Posterior vena cava (tissue), 2 donors: ENCODE measurements at regions of chr6 and their contacts with region 1.

Region 1: GRCh38 chr6:53725791-53726431 is 60.4 kb upstream of the KLHL31 start:
- DNase-seq: peak; percentile 93

Region 2: GRCh38 chr6:52503848-52504781 is 1221.8 kb before region 1 on chr6:
- intact Hi-C with region 1: no loop called
- DNase-seq: peak; percentile 94

Region 3: DNA sequence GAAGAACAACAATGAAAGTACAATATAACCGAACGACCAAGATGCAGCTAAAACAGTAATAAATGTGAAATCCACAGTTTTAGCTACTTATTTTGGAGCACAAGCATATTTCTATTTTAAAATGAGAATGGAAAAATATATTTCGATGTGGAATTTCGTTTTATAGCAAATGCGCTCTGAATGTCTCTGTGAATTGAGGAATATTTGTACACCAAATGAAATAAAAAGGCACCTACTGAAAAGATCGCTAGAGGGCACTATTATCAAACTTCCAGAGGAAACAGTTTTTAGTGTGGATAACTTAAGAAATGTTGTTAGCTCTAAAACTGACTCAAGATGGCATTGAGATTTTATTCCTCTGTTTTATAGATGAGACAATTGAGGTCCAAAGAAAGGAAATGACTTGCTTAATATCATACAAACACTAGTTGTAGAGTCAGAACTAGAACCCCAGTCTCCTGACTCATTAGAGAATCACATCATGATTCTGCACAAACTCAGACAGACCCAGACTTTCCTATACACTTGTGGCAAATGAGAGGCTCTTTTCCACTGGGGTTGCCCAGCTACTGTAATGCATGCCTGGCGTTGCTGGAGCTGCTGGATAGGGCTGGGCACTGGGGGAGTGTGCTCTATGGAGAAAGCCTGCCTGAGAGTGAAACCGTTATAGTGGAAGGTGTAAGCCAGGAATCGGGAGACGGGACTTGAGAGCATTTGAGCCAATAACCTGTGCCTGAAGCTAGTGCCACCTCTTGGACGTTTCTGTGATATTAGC is 232.9 kb before region 1 on chr6:
- intact Hi-C with region 1: loop called in 1 of 2 experiments (anchors 5 kb)
- DNase-seq: no peak

Region 4: GRCh38 chr6:53504512-53504911 is 221.4 kb before region 1 on chr6:
- intact Hi-C with region 1: loop called (anchors 5 kb)
- DNase-seq: no peak

Region 5: DNA sequence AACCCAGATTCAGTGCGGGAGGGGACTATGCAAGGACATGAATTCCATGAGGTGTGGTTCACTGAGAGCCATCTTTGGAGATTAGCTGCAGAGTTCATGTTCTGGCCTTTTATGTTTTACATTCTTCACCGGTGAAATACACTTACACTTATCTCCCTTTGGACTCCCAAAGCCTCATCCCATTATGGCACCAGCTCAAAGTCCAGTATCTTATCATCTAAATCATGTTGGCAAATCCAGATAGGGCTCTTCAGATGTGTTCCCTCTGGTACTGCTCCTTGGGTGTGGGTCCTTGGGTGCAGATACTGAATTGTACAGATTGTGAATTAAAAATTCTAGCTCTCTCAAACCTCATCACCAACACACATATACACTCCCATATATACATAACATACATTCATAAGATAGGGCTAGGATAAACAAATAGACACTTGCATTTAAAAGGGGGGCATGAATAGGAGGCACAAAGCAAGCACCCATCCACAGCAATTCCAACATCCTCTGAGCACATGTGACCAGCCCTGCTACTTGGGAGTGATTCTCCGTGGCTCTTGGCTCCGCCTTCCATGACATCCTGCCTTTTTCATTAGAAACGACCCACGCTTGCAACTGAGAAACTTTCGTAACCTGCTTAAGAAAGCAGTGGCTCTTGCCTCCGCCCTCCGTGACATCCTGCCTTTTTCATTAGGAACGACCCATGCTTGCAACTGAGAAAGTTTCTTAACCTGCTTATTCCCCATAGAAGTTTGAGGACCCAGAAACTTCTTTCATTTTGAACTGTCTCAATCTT is 15.3 kb after region 1 on chr6:
- intact Hi-C with region 1: no loop called
- DNase-seq: no peak